GM10248 (cell line): ENCODE measurements at regions of chr1 and their contacts with region 1.

Region 1: DNA sequence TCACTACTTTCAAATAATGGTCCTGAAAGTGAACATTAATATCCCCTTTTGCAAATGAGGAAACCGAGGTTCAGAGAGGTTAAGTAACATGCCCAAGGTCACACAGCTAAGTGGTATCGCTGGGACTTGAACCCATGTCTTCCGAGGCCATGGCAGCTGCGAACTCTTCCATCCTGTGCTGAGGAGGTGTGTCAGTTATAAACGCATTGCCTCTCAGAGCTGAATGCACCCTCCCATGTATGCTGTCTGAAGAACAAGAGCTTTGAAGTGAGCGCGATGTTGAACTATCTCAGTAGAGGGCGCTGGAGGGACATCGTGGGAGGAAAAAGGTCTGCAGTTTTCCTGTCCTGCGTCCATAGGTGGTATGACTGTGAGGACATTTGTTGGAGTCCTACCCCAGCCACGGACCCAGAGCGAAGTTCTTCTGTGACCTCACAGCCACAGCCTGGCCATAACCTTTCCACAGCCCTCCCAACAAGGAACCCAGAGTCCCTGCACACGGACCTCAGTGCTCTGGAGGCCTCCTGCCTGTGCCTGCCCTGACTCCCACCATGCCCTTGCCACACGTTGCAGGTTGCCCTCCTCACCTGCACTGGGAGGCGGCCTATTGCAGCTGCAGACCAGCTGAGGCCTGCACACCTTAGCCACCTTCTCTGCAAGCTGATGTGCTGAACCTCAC is 7.5 kb downstream of the MYOC start:
- DNase-seq: peak; percentile 58
- CTCF ChIP-seq: peak; percentile 82

Region 2: GRCh38 chr1:171576144-171576543 is 68.8 kb before region 1 on chr1:
- CTCF ChIA-PET with region 1: no interaction called
- POLR2A ChIA-PET with region 1: no interaction called
- DNase-seq: no peak
- CTCF ChIP-seq: no peak

Region 3: GRCh38 chr1:171623651-171624331 is 21.2 kb before region 1 on chr1:
- CTCF ChIA-PET with region 1: interaction called, 18 read pairs
- POLR2A ChIA-PET with region 1: no interaction called
- DNase-seq: no peak
- CTCF ChIP-seq: no peak

Region 4: DNA sequence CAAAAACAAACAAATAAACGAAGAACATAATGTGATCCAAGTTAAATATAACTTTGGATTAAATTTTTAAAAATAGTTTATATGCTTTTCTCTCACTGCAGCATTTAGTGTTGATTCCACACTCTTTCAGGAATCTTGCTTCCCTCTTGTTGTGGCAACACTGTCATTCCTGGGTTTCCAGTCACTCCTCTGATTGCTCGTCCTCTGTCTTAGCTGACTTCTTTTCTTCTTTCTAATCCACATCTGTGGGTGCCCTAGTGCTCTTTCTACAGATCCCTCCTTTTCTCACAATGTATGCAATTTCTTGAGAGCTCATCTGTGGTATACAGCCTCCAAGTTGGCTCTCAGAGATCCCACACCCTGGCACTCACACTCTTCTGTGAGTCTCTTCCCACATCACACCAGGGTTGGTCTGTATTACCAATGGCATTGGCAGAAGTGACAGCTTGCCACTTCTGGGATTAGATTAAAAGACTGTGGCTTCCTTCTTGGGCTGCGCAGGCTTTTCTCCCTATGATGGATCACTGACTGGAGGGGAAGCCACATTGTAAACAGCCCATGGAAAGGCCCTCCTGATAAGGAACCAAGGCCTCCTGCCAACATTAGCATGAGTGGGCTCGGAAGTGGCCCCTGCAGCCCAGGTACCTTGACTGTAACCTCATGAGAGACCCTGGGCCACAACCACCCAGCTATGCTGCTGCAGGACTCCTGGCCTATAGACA is 19.1 kb after region 1 on chr1:
- CTCF ChIA-PET with region 1: interaction called, 62 read pairs
- POLR2A ChIA-PET with region 1: no interaction called
- DNase-seq: no peak
- CTCF ChIP-seq: no peak

Region 5: GRCh38 chr1:171727778-171728177 is 82.8 kb after region 1 on chr1:
- CTCF ChIA-PET with region 1: no interaction called
- POLR2A ChIA-PET with region 1: no interaction called
- DNase-seq: no peak
- CTCF ChIP-seq: no peak

Region 6: GRCh38 chr1:171741872-171742576 is 97.1 kb after region 1 on chr1 and contains the start of gene VAMP4:
- CTCF ChIA-PET with region 1: interaction called, 10 read pairs
- POLR2A ChIA-PET with region 1: no interaction called
- DNase-seq: peak; percentile 89
- CTCF ChIP-seq: no peak

Region 7: DNA sequence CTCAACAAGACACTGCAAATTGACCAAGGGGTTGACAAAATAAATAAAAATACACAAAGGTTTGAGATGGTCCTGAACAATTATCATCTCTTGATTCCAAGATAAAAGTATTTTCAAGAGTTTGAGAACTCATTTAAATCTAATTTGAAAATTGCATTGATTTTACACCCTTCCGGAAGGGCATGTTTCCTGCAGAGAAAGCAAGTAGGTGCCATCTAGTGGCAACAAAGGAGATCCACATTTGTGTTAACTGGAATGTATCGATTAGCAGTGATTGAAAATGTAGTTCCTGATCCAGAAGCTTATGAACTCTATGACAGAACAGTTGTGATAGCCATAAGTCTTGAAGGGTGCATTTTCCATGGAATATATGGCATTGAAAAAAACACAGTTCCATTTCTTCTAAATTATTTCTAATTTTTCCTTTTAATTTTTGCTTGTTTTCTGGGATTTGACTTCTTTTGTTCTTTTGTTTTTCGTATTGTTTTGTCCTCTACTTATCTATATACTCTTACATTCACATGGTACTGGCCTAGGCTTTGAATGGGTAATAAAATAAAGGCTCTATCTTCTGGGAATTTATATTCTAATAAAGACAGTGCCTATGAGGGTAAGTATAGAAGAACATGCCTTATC is 340.0 kb after region 1 on chr1:
- CTCF ChIA-PET with region 1: interaction called, 25 read pairs
- POLR2A ChIA-PET with region 1: no interaction called
- DNase-seq: peak; percentile 36
- CTCF ChIP-seq: peak; percentile 72